ENCODE measurements at regions of chr14 and their contacts with region 1.

Region 1: DNA sequence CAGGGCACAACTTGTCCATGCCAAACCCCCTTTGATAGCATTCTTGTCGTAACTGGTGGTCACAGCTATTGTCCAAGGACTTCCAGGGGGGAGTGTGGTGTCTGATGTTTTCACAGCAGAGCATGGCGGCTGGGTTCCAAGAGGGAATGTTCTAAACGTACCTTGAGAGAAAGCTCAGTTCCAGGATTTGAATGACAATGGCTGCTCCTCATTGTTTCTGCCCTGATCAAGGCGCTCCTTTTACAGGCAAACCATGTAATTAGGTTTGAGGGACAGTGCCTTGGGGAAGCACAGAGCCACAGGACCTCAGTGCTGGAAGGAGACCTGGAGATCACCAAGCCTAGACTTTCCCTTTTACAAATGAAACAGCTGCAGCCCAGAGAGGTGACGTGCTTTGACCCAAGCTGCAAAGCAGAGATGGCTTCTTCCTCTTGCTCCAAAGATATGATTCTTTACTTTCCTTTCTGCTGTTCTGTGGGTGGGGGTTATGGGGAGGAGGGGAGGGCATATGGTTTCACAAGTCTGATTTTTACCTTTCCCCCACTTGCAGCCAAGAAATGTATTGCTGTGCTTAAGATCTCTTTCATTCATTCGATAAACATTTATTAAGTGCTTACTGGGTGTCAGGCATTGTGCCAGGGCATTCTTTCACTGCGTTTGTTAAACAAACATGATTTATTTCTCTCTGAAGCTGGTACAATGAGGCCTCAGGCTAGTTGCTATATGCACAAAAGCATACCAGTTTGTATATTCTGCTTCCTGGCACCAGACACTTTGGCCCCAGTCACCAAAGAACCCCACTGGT is 172.8 kb downstream of the KTN1 start:
- DNase-seq: peak; percentile 67
- H3K4me3 ChIP-seq: no peak overlapping the region
- H3K27ac ChIP-seq: no peak overlapping the region
- H3K4me1 ChIP-seq: peaks cover 30% of the 10 kb centered on the region
- H3K27me3 ChIP-seq: no peaks in the 10 kb centered on the region
- CTCF ChIP-seq: no peak

Region 2: GRCh38 chr14:54226103-54226502 is 1526.7 kb before region 1 on chr14:
- CTCF ChIA-PET with region 1: interaction called, 10 read pairs
- POLR2A ChIA-PET with region 1: no interaction called
- intact Hi-C with region 1: no loop called
- DNase-seq: no peak
- H3K4me3 ChIP-seq: no peak overlapping the region
- H3K27ac ChIP-seq: no peak overlapping the region
- H3K4me1 ChIP-seq: no peaks in the 10 kb centered on the region
- H3K27me3 ChIP-seq: no peaks in the 10 kb centered on the region
- CTCF ChIP-seq: no peak

Measured in A673 (cell line).